ENCODE measurements at regions of chr4 and their contacts with region 1.

Region 1: DNA sequence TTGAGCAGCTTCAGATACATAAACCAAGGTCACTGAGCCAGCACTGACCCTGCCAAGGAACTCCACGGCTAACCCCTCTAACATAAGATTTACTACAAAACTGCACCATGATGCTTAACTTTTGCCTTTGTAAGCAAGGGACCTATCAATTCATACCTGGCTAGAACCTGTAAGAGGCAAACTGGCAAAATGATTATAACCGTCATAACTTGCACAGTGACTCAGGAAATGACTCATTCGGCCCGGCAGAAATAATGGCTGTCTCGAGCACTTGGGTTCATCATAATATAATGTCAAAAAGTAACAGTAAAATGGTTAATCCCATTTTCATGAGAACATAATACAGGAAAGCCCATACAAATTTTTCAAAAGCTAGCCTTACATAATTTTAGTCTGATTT is 17.2 kb downstream of the RASGEF1B start:
- DNase-seq: peak; percentile 73
- H3K4me3 Mint-ChIP-seq: no peak overlapping the region
- H3K27ac Mint-ChIP-seq: peak overlapping the region; percentile 39
- H3K4me1 Mint-ChIP-seq: peaks cover 26% of the 10 kb centered on the region
- H3K27me3 Mint-ChIP-seq: no peaks in the 10 kb centered on the region
- CTCF ChIP-seq: no peak

Region 2: DNA sequence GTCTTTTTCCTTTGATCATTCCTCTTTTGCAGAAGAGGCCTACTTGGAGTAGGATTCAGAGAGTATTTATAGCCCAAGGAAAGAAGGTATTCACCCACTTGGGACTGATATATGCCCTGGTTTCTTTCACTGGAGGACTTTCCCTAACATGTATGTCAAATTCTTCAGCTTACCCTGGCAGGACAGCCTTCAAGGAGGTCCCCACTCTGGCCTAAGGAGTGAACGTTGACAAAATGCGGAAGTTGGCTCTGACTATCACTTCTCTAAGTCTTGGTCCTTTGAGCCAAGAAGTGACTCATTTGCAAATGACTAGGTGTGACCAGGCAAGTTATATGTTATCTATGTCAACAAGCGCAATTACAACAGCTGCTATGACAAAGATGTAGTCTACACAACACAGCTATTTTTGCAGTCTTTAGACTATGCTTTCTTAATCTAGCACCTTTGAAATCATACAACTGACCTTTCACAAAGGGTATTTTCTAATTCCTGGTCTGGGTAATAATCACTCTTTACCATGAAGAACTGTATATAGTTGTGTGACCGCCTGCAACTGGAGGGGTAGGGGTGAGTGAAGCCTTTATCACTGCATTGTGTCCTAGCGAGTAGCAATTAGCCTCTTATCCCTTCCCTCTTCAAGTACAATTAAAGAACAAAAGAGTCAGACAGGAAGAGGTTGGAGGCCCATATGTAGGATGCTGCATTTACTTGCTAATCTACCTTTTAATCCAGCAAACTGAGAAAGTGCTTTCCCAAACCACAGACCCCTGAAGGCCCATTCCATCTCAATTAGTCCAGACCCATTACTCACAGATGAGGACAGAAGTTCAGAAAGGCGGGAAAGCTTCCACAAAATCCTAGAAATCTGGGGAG is 32.9 kb before region 1 on chr4:
- CTCF ChIA-PET with region 1: interaction called, 13 read pairs
- POLR2A ChIA-PET with region 1: interaction called, 31 read pairs
- intact Hi-C with region 1: no loop called
- DNase-seq: peak; percentile 88
- H3K4me3 Mint-ChIP-seq: no peak overlapping the region
- H3K27ac Mint-ChIP-seq: peak overlapping the region; percentile 95
- H3K4me1 Mint-ChIP-seq: peaks cover 22% of the 10 kb centered on the region
- H3K27me3 Mint-ChIP-seq: no peaks in the 10 kb centered on the region
- CTCF ChIP-seq: no peak

Region 3: GRCh38 chr4:81427344-81427821 is 27.1 kb before region 1 on chr4:
- CTCF ChIA-PET with region 1: interaction called, 13 read pairs
- POLR2A ChIA-PET with region 1: interaction called, 31 read pairs
- intact Hi-C with region 1: no loop called
- DNase-seq: peak; percentile 34
- H3K4me3 Mint-ChIP-seq: peak overlapping the region; percentile 35
- H3K27ac Mint-ChIP-seq: peak overlapping the region; percentile 94
- H3K4me1 Mint-ChIP-seq: peaks cover 25% of the 10 kb centered on the region
- H3K27me3 Mint-ChIP-seq: no peaks in the 10 kb centered on the region
- CTCF ChIP-seq: no peak

Measured in MCF 10A (cell line).